MCF 10A (cell line): ENCODE measurements at regions of chr10 and their contacts with region 1.

Region 1: DNA sequence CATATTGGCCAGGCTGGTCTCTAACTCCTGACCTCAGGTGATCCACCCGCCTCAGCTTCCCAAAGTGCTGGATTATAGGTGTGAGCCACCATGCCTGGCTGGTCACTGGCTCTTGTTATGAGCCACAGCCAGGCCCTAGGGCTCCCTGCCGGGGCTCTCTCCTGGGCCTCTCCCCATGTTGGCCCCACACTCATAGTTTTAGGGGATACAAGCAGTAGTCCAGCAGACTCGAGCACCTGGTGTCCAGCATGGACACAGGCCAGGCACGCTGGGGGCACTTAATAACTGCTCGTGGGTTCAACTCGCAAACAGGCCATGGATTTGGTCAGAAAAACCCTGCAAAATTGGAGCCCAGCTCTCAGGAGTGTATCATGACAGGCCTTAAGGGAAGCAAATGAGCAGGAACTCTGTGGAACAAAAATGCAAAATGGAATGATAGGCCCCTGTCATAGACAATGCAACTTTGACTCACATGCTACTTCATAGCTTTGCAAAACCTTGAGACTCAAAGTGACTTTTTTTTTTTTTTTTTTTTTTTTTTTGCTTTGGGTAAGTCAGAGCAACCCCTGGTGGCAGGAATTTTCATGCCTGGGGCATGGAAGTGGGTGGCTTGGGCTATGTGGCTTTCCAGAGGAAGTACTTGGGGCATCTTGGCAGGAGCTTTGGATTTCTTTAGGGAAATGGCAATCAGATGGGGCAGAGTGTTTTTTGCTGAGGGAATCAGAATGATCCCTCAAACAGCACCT is 62.5 kb downstream of the TACC2 start:
- DNase-seq: peak; percentile 89
- H3K4me3 Mint-ChIP-seq: no peak overlapping the region
- H3K27ac Mint-ChIP-seq: no peak overlapping the region
- H3K4me1 Mint-ChIP-seq: peaks cover 25% of the 10 kb centered on the region
- H3K27me3 Mint-ChIP-seq: no peaks in the 10 kb centered on the region
- CTCF ChIP-seq: peak; percentile 56

Region 2: DNA sequence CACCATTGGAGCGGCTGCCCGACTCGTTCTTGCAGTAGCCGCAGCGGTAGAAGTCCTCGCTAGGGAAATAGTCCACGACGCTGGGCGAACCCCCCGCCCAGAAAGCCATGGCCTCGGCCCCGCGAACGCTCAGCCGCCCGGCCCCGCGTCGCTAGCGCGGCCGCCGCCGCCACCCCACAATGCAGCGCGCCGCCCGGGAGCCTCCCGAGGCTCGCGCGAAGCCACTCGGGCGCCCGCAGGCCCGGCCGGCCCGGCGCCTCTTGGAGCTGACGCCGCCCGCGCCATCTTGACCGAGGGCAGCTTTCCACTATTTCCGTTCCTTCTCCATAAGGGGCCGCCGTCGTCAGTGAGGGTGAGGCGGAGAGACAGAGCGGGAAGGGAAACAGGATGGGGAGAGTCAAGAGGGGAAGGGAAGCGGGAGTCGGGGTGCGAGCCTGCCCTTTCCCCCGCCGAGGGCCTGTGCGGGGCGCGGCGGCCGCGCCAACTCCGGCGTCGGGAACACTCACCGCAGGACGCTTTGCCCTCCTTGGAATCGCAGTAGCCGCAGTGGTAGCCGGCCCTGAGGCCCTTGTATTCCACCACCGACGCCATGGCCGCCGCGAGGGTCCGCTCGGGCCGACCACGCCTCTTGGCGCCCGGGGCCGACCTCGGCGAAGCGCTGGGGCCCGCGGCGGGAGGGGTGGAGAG is 123.4 kb before region 1 on chr10 and contains the start of gene ATE1:
- CTCF ChIA-PET with region 1: interaction called, 3 read pairs
- POLR2A ChIA-PET with region 1: interaction called, 4 read pairs
- intact Hi-C with region 1: loop called (anchors 2 kb)
- DNase-seq: peak; percentile 95
- H3K4me3 Mint-ChIP-seq: peak within 1 kb of the TSS; percentile 93
- H3K27ac Mint-ChIP-seq: peak within 1 kb of the TSS; percentile 98
- H3K4me1 Mint-ChIP-seq: peaks cover 18% of the 10 kb centered on the region
- H3K27me3 Mint-ChIP-seq: no peaks in the 10 kb centered on the region
- CTCF ChIP-seq: no peak
- total RNA-seq, gene ATE1: 33.1 and 40.4 TPM in 2 replicates

Region 3: GRCh38 chr10:122019414-122019975 is 31.9 kb before region 1 on chr10:
- CTCF ChIA-PET with region 1: interaction called, 6 read pairs
- POLR2A ChIA-PET with region 1: interaction called, 10 read pairs
- intact Hi-C with region 1: no loop called
- DNase-seq: peak; percentile 81
- H3K4me3 Mint-ChIP-seq: peak overlapping the region; percentile 68
- H3K27ac Mint-ChIP-seq: peak overlapping the region; percentile 86
- H3K4me1 Mint-ChIP-seq: peaks cover 21% of the 10 kb centered on the region
- H3K27me3 Mint-ChIP-seq: no peaks in the 10 kb centered on the region
- CTCF ChIP-seq: no peak

Region 4: GRCh38 chr10:122040786-122041185 is 10.6 kb before region 1 on chr10:
- CTCF ChIA-PET with region 1: interaction called, 10 read pairs
- POLR2A ChIA-PET with region 1: interaction called, 3 read pairs
- intact Hi-C with region 1: no loop called
- DNase-seq: no peak
- H3K4me3 Mint-ChIP-seq: no peak overlapping the region
- H3K27ac Mint-ChIP-seq: no peak overlapping the region
- H3K4me1 Mint-ChIP-seq: no peaks in the 10 kb centered on the region
- H3K27me3 Mint-ChIP-seq: no peaks in the 10 kb centered on the region
- CTCF ChIP-seq: no peak

Region 5: DNA sequence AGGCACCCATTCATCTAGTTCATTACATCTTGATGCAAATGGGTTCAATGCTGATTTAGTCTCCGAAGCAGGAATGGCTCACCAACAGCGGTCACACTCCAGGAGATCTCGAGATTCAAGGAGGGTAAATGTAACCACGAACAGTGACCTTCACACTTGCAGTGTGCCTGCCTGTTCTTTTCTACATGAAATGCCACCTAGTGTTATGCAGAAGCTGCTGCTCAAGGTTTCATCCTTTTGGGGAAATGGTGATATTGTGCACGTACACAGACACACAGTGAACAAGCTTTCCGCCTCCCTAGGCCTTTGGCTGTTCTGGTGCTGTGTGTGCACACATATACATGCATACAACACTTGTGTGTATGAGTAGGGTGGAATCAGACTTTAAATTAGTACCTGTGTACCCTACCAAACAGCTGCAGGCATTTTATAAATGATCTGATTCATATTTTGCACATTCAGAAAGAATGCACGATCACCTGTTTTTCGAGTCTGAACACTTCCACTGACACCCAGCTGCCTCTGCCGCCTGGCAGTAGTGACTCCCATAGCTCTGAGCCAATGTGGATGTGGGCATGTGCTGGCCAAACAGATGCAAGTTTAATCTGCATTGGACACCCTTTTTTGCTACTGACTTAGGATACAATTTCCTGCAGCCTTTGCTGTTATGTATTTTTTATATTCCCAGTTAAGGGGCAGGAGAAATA is 38.0 kb after region 1 on chr10:
- CTCF ChIA-PET with region 1: interaction called, 15 read pairs
- POLR2A ChIA-PET with region 1: interaction called, 8 read pairs
- intact Hi-C with region 1: loop called (anchors 1 kb)
- DNase-seq: peak; percentile 52
- H3K4me3 Mint-ChIP-seq: no peak overlapping the region
- H3K27ac Mint-ChIP-seq: peak overlapping the region; percentile 51
- H3K4me1 Mint-ChIP-seq: peaks cover 19% of the 10 kb centered on the region
- H3K27me3 Mint-ChIP-seq: no peaks in the 10 kb centered on the region
- CTCF ChIP-seq: peak; percentile 14

Region 6: DNA sequence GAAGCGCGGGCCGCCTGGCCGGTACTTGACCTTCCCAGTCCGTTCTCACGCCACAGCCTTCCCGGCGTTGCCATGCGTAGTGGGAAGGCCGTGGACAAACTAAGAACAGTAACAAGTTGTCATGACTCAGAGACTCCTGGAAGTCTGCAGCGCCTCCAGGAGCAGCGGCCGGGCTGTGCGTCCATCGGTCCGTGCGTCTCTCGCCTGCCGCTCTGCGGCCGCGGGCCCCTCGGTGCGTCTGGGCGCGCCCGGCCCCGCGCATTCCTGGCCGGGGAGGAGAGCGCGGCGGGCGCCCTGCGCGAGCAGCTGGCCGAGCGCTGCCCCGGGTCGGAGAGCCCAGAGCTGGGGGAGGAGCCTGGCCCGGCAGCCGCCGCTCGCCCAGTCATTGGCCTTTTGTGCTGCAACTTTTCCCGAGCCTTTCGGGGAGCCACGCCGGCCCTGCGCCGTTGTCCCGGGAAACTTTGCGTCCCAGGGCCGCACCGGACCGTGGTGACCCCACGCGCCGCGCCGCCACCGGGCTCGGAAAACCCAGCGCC is 61.3 kb after region 1 on chr10:
- CTCF ChIA-PET with region 1: interaction called, 35 read pairs
- POLR2A ChIA-PET with region 1: interaction called, 21 read pairs
- intact Hi-C with region 1: loop called (anchors 1 kb)
- DNase-seq: peak; percentile 95
- H3K4me3 Mint-ChIP-seq: peak overlapping the region; percentile 85
- H3K27ac Mint-ChIP-seq: peak overlapping the region; percentile 90
- H3K4me1 Mint-ChIP-seq: peaks cover 32% of the 10 kb centered on the region
- H3K27me3 Mint-ChIP-seq: no peaks in the 10 kb centered on the region
- CTCF ChIP-seq: peak; percentile 30

Region 7: GRCh38 chr10:122142641-122143237 is 91.3 kb after region 1 on chr10:
- CTCF ChIA-PET with region 1: interaction called, 5 read pairs
- POLR2A ChIA-PET with region 1: interaction called, 4 read pairs
- intact Hi-C with region 1: loop called (anchors 1 kb)
- DNase-seq: no peak
- H3K4me3 Mint-ChIP-seq: no peak overlapping the region
- H3K27ac Mint-ChIP-seq: peak overlapping the region; percentile 59
- H3K4me1 Mint-ChIP-seq: peaks cover 39% of the 10 kb centered on the region
- H3K27me3 Mint-ChIP-seq: no peaks in the 10 kb centered on the region
- CTCF ChIP-seq: peak; percentile 99